Dendritic cell treated with granulocyte-macrophage colony-stimulating factor and Interleukin-4, amounts not matched to agents 40 ng/mL and 50 ng/mL, for 4 days (primary cell): ENCODE measurements at regions of chr17 and their contacts with region 1.

Region 1: DNA sequence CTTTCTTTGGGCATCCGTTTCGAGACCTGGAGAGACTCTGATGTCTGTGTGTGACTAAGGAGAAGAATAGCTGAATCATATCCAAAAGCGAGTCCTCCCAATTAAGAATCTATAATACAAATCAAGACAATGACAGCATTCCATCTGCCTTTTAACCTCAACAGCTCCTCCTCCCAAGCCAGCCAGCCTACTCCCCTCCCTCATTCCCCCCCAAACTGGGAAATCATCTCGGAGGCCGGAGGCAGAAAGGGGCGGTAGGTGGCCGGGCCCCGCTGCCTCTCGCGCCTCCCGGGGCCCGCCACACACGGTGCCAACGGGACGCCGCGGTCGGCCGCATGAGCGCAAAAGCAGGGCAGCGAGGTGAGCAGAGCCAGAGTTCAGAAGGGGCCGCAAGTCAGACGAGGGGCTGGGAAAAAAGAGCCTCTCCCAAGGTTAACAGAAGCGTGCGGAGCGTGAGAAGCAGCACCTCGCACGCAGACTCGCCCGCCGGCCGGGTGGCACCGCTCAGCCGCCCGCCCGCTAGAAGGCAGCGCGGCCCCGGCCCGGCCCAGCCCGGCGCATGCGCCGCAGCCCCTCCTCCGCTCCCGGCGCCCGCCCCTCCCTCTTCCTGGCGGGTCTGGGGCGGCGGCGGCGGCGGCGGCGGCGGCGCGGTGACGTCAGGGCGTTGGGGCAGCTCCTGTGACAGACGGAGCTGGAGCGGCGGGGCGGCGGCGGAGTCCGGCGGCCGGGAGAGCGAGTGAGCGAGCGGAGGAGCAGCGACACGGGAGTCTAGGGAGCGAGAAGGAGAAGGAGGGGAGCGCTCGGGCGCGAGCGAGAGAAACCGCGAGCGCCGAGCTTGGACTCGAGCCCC is at the start of gene PAFAH1B1:
- H3K4me3 Mint-ChIP-seq: peak within 1 kb of the TSS; percentile 95
- H3K27ac Mint-ChIP-seq: peak within 1 kb of the TSS; percentile 88
- H3K4me1 Mint-ChIP-seq: peaks cover 25% of the 10 kb centered on the region
- H3K27me3 Mint-ChIP-seq: no peaks in the 10 kb centered on the region

Region 2: GRCh38 chr17:2511462-2512369 is 81.5 kb before region 1 on chr17 and contains the start of gene METTL16:
- intact Hi-C with region 1: loop called (anchors 5 kb)
- H3K4me3 Mint-ChIP-seq: no peak within 1 kb of the TSS
- H3K27ac Mint-ChIP-seq: no peak within 1 kb of the TSS
- H3K4me1 Mint-ChIP-seq: peaks cover 10% of the 10 kb centered on the region
- H3K27me3 Mint-ChIP-seq: no peaks in the 10 kb centered on the region

Region 3: DNA sequence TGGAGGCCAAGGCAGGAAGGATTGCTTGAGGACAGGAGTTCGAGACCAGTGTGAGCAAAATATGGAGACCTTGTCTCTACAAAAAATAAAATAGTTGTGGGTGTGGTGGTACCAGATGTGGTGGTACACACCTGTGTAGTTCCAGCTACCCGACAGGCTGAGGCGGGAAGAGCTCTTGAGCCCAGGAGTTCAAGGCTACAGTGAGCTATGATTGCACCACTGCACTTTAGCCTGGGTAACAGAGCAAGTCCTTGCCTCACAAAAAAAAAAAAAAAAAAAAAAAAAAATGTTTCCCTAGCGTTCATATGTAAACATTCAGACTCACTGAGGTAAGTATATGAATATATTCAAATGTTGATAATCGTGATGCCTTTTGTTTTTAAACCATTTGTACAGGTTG is 78.8 kb after region 1 on chr17:
- intact Hi-C with region 1: loop called (anchors 5 kb)
- H3K4me3 Mint-ChIP-seq: no peak overlapping the region
- H3K27ac Mint-ChIP-seq: no peak overlapping the region
- H3K4me1 Mint-ChIP-seq: no peaks in the 10 kb centered on the region
- H3K27me3 Mint-ChIP-seq: no peaks in the 10 kb centered on the region

Region 4: GRCh38 chr17:2711601-2712299 is 118.6 kb after region 1 on chr17 and contains the start of gene CLUH:
- intact Hi-C with region 1: loop called (anchors 1 kb)
- H3K4me3 Mint-ChIP-seq: peak within 1 kb of the TSS; percentile 86
- H3K27ac Mint-ChIP-seq: peak within 1 kb of the TSS; percentile 95
- H3K4me1 Mint-ChIP-seq: peaks cover 70% of the 10 kb centered on the region
- H3K27me3 Mint-ChIP-seq: no peaks in the 10 kb centered on the region